Kidney (tissue), 22 donors: ENCODE measurements at regions of chr1 and their contacts with region 1.

Region 1: GRCh38 chr1:89974701-89975470 is 20.0 kb upstream of the ZNF326 start:
- DNase-seq: no peak
- H3K4me3 ChIP-seq: no peak overlapping the region
- H3K27ac ChIP-seq: no peak overlapping the region
- H3K4me1 ChIP-seq: no peaks in the 10 kb centered on the region
- H3K27me3 ChIP-seq: no peaks in the 10 kb centered on the region
- CTCF ChIP-seq: no peak

Region 2: DNA sequence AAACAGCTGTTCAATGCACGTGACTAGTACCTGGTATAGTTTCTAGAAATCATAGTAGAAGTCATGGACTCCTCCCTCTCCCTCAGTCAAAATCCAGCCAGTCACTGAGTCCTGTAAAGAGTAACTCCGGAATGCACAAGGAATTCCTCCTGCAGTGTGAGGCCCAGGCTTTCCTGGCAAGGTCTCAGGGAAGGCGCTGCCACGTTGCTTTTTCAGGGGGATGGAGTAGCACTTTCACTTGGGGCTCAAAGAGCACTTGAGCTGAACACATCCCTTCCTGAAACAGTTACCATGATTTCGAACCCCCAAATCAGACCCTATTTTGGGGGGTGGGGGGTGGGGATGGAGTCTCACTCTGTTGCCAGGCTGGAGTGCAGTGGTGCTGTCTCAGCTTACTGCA is 180.5 kb before region 1 on chr1:
- intact Hi-C with region 1: loop called (anchors 5 kb)
- DNase-seq: peak in 3 of 5 donors; percentile 22 to 51 (median 41)
- H3K4me3 ChIP-seq: no peak overlapping the region
- H3K27ac ChIP-seq: no peak overlapping the region
- H3K4me1 ChIP-seq: no peaks in the 10 kb centered on the region
- H3K27me3 ChIP-seq: no peaks in the 10 kb centered on the region
- CTCF ChIP-seq: no peak